Adrenal gland (tissue), 19 donors: ENCODE measurements at regions of chr10 and their contacts with region 1.

Region 1: DNA sequence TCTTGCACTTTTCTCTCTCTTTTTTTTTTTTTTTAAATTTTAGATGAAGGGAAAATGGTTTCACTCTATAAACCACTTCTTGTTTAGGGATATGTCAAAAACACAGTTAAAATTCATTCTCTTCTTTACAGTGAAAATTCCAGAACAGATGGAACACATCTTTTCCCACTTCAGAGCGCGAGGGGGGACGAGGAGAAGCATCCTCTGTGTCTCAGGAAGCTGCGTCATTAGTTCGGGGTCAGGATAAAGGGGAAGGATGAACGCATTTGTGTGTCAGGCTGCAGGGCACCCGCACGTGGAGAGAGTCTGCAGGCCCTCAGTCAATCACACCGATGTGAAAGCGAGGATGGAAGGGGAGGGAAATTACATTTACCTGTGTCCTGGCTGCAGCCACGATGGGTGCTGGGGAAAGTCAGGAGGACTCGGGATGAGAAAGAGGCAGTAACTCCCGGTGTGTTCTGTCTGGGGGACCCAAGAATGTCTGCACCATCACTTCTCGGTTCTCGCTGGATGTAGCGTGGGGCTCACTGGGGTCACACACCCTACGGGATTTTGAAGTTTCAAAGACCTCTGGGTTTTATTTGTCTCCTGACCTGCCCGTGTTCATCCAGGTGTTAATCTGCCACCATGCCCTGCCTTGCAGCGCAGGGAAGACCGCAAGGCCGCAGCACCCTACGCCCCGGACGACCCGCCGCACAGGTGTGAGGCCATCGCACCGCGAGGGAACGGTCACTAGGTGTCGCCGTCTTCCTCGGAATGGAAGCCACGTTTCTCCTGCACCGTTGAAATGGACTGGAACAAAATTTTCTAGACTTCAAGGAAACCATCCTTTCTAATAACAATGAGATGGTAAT is 66.7 kb upstream of the PITRM1 start:
- DNase-seq: peak; percentile 41 to 84 (median 68)
- H3K4me3 ChIP-seq: no peak overlapping the region
- H3K27ac ChIP-seq: peak overlapping the region in 1 of 5 donors; percentile 62
- H3K4me1 ChIP-seq: peaks cover 0 to 3% of the 10 kb centered on the region in 2 donors
- H3K27me3 ChIP-seq: peaks cover 6% of the 10 kb centered on the region
- CTCF ChIP-seq: peak; percentile 71 to 91 (median 84)
- POLR2A ChIP-seq: no peak

Region 2: GRCh38 chr10:2908851-2909630 is 330.3 kb before region 1 on chr10:
- intact Hi-C with region 1: no loop called
- DNase-seq: no peak
- H3K4me3 ChIP-seq: no peak overlapping the region
- H3K27ac ChIP-seq: no peak overlapping the region
- H3K4me1 ChIP-seq: no peaks in the 10 kb centered on the region
- H3K27me3 ChIP-seq: no peaks in the 10 kb centered on the region
- CTCF ChIP-seq: no peak
- POLR2A ChIP-seq: no peak

Region 3: DNA sequence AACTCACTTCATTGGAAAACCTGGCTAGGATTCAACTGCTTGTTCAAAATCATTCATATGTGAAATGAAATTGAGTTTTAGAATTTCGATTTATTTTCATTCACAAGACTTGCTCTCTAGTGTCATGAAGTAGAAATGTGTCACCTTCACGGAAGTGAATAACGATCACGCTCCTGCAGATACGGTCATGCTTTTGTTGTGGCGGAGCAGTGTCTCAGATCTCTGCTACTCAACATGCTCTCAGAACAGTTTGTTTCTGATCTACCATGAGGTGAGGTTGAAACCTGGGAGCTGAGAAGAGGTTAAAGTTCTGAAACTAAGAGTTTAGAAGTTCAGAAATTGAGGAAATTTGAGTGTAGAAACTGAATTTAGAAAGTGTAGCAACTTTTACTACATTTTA is 52.9 kb before region 1 on chr10:
- intact Hi-C with region 1: no loop called
- DNase-seq: peak in 1 of 7 donors; percentile 9
- H3K4me3 ChIP-seq: no peak overlapping the region
- H3K27ac ChIP-seq: no peak overlapping the region
- H3K4me1 ChIP-seq: no peaks in the 10 kb centered on the region
- H3K27me3 ChIP-seq: no peaks in the 10 kb centered on the region
- CTCF ChIP-seq: no peak
- POLR2A ChIP-seq: no peak

Region 4: DNA sequence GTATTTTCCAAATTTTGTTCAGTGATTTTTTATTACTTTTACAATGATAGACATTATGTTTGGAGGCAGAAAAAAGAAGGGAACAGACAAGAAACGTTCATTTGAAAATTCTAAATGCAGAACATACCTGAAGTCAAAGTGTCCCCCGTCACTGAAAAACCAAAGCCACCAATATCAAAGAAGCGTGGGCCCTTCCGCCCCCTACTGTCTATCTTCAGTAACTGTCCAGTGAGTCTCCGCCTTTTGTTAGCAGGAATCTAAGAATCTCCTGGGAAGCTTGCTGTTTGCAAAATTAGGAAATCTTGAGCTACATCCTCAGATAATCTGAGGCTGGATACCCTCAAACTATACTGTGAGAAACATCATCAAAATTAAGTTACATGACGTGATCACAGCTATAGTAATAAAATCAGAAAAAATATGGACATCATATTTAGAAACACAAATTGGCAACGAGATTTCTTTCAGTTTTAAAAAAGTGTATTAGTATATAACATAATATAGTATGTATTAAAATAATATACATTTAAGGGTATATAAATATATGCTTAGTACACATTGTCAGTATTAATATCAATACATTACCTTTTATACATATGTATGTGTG is 1417.4 kb after region 1 on chr10:
- intact Hi-C with region 1: loop called in 1 of 2 experiments (anchors 5 kb)
- DNase-seq: peak; percentile 23 to 69 (median 39)
- H3K4me3 ChIP-seq: no peak overlapping the region
- H3K27ac ChIP-seq: no peak overlapping the region
- H3K4me1 ChIP-seq: no peaks in the 10 kb centered on the region
- H3K27me3 ChIP-seq: no peaks in the 10 kb centered on the region
- CTCF ChIP-seq: peak; percentile 66 to 88 (median 78)
- POLR2A ChIP-seq: no peak